ENCODE measurements at regions of chr7 and their contacts with region 1.

Region 1: DNA sequence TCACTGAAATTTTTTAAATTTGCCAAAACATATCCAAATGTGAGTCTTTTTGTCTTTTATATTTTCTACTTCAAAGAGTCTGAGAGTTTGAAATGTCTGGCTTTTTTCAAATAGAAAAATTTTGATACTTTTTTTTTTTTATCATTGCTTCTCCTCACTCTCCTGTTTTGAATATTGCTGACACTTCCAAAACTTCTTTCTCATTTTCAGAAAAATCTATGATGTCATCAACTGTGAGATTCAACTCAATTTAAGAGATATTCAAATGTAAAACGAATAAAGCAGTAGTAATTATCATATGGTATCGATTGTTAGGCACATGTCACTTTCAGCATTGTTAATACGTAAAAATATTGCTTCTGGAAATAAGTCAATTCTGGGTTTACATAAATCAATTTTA is 505.8 kb upstream of the STEAP1 start:
- DNase-seq: no peak
- ATAC-seq: no peak
- H3K4me3 ChIP-seq: no peak overlapping the region
- H3K4me3 Mint-ChIP-seq: no peak overlapping the region
- H3K27ac ChIP-seq: no peak overlapping the region
- H3K27ac Mint-ChIP-seq: no peak overlapping the region
- H3K4me1 ChIP-seq: no peaks in the 10 kb centered on the region
- H3K4me1 Mint-ChIP-seq: no peaks in the 10 kb centered on the region
- H3K27me3 ChIP-seq: no peaks in the 10 kb centered on the region
- H3K27me3 Mint-ChIP-seq: no peaks in the 10 kb centered on the region
- CTCF ChIP-seq: no peak

Region 2: GRCh38 chr7:89681448-89681847 is 32.9 kb after region 1 on chr7:
- intact Hi-C with region 1: loop called (anchors 5 kb)
- DNase-seq: no peak
- ATAC-seq: no peak
- H3K4me3 ChIP-seq: no peak overlapping the region
- H3K4me3 Mint-ChIP-seq: no peak overlapping the region
- H3K27ac ChIP-seq: no peak overlapping the region
- H3K27ac Mint-ChIP-seq: no peak overlapping the region
- H3K4me1 ChIP-seq: no peaks in the 10 kb centered on the region
- H3K4me1 Mint-ChIP-seq: no peaks in the 10 kb centered on the region
- H3K27me3 ChIP-seq: no peaks in the 10 kb centered on the region
- H3K27me3 Mint-ChIP-seq: no peaks in the 10 kb centered on the region
- CTCF ChIP-seq: no peak

Measured in natural killer cell (primary cell).